Transverse colon (tissue), 4 donors: ENCODE measurements at regions of chr20 and their contacts with region 1.

Region 1: DNA sequence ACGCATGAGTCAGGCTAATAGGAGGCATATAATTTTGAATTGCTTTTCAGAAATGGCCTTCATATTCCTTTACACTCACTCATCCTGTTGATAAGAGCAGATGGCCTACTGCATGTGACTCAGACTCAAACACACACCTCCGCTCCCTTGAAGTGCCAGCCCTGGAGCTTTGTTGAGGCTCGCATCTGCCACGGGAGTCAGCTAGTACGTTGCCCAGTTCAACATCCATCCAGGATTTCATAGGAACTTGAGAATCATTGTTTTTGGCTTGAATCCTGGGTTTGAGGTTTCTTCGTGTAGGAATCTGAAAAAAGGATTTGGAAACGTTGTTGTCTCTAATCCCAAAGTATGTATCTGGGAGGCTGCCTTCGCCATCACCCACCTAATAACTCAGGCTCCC is 87.4 kb upstream of the JAG1 start:
- DNase-seq: no peak
- H3K4me3 ChIP-seq: no peak overlapping the region
- H3K27ac ChIP-seq: no peak overlapping the region
- H3K4me1 ChIP-seq: no peaks in the 10 kb centered on the region
- H3K27me3 ChIP-seq: no peaks in the 10 kb centered on the region
- CTCF ChIP-seq: no peak
- EP300 ChIP-seq: no peak
- POLR2A ChIP-seq: no peak

Region 2: DNA sequence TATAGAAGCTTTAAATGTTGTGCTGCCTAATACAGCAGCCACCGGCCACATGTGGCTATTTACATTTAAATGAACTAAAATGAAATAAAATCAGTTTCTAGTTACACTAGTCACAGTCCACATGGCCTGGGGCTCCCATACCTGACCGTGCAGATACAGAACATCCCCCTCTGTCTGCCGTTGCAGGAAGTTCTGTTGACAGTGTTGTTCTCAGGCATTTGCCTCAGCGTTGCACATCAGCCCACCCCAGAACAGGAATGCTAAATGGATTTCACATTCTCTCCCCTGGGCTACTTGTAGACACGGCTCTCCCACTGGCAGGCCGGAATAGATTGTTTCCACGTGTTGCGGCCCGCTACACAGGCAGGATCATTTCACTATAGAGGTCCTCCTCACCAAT is 113.8 kb before region 1 on chr20:
- in situ Hi-C with region 1: no loop called
- intact Hi-C with region 1: no loop called
- DNase-seq: peak; percentile 7
- H3K4me3 ChIP-seq: no peak overlapping the region
- H3K27ac ChIP-seq: no peak overlapping the region
- H3K4me1 ChIP-seq: peaks cover 0 to 17% (median under 1%) of the 10 kb centered on the region in 4 donors
- H3K27me3 ChIP-seq: no peaks in the 10 kb centered on the region
- CTCF ChIP-seq: no peak
- EP300 ChIP-seq: no peak
- POLR2A ChIP-seq: no peak

Region 3: GRCh38 chr20:10902576-10903282 is 141.5 kb after region 1 on chr20:
- in situ Hi-C with region 1: no loop called
- intact Hi-C with region 1: loop called (anchors 10 kb)
- DNase-seq: no peak
- H3K4me3 ChIP-seq: no peak overlapping the region
- H3K27ac ChIP-seq: no peak overlapping the region
- H3K4me1 ChIP-seq: peaks cover 0 to 13% (median 0%) of the 10 kb centered on the region in 4 donors
- H3K27me3 ChIP-seq: no peaks in the 10 kb centered on the region
- CTCF ChIP-seq: no peak
- EP300 ChIP-seq: no peak
- POLR2A ChIP-seq: no peak